Colonic mucosa (tissue), 4 donors: ENCODE measurements at regions of chr10 and their contacts with region 1.

Region 1: GRCh38 chr10:124388823-124389612 is 29.7 kb downstream of the OAT start:
- DNase-seq: peak; percentile 91
- H3K4me3 ChIP-seq: peak overlapping the region; percentile 51
- H3K27ac ChIP-seq: no peak overlapping the region
- H3K4me1 ChIP-seq: peaks cover 4% of the 10 kb centered on the region
- H3K27me3 ChIP-seq: no peaks in the 10 kb centered on the region
- CTCF ChIP-seq: peak; percentile 94

Region 2: GRCh38 chr10:123582084-123582989 is 806.7 kb before region 1 on chr10:
- intact Hi-C with region 1: loop called (anchors 10 kb)
- DNase-seq: peak; percentile 80
- H3K4me3 ChIP-seq: no peak overlapping the region
- H3K27ac ChIP-seq: no peak overlapping the region
- H3K4me1 ChIP-seq: no peaks in the 10 kb centered on the region
- H3K27me3 ChIP-seq: no peaks in the 10 kb centered on the region
- CTCF ChIP-seq: peak; percentile 77

Region 3: GRCh38 chr10:123994417-123995081 is 394.5 kb before region 1 on chr10:
- intact Hi-C with region 1: loop called (anchors 1 kb)
- DNase-seq: peak; percentile 89
- H3K4me3 ChIP-seq: peak overlapping the region; percentile 14
- H3K27ac ChIP-seq: no peak overlapping the region
- H3K4me1 ChIP-seq: no peaks in the 10 kb centered on the region
- H3K27me3 ChIP-seq: peaks cover 22% of the 10 kb centered on the region
- CTCF ChIP-seq: peak; percentile 99